ENCODE measurements at regions of chr4 and their contacts with region 1.

Region 1: GRCh38 chr4:184474263-184475095 is at the start of gene IRF2:
- DNase-seq: peak; percentile 99
- ATAC-seq: peak; percentile 76
- H3K4me3 Mint-ChIP-seq: peak within 1 kb of the TSS; percentile 88
- H3K27ac Mint-ChIP-seq: peak within 1 kb of the TSS; percentile 94
- H3K4me1 Mint-ChIP-seq: peaks cover 59% of the 10 kb centered on the region
- H3K27me3 Mint-ChIP-seq: no peaks in the 10 kb centered on the region
- total RNA-seq, gene IRF2: 50.1 to 68.9 TPM

Region 2: DNA sequence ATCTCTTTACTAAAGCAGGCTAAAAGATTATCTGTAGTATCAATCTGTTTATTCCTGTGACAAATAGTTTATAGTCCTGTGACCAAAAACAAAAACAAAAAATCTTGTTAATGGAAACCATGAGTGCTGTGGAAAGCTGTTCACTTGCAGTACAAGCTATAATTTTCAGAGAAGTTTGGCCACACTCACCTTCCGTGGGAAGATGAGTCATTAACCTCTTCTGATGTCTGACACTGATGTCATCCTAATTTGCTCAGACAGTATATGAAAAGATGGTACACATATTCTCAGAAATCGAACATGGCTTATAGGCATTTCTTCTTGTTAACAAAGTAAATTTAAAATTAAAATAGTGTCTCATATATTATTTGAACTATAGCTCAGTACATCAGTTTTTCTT is 236.9 kb before region 1 on chr4:
- CTCF ChIA-PET with region 1: no interaction called
- POLR2A ChIA-PET with region 1: no interaction called
- intact Hi-C with region 1: loop called in 1 of 2 experiments (anchors 1 kb)
- DNase-seq: peak; percentile 73
- ATAC-seq: peak; percentile 97
- H3K4me3 Mint-ChIP-seq: peak overlapping the region; percentile 9
- H3K27ac Mint-ChIP-seq: peak overlapping the region; percentile 84
- H3K4me1 Mint-ChIP-seq: peaks cover 28% of the 10 kb centered on the region
- H3K27me3 Mint-ChIP-seq: no peaks in the 10 kb centered on the region

Region 3: DNA sequence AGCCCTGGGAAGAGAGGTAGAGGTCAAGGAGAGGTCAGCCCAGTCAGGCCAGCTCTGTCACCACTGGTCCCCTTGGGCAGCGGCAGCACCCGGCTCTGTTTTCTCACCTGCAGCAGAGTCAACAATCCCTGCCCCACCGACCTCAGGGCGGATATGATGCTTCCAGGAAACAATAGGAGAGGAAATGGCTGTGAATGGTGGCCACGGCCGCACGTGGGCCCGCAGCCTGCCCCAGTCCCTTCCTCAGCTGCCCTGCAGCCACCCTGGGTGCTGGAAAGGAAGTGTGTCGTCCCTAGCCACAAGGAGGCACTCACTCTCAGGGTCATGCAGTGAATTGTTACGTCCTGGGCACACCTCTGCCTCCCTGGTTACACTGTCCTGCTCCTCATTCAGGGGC is 164.3 kb before region 1 on chr4:
- CTCF ChIA-PET with region 1: interaction called, 3 read pairs
- POLR2A ChIA-PET with region 1: no interaction called
- intact Hi-C with region 1: loop called in 1 of 2 experiments (anchors 5 kb)
- DNase-seq: peak; percentile 68
- ATAC-seq: peak; percentile 74
- H3K4me3 Mint-ChIP-seq: no peak overlapping the region
- H3K27ac Mint-ChIP-seq: peak overlapping the region; percentile 55
- H3K4me1 Mint-ChIP-seq: peaks cover 50% of the 10 kb centered on the region
- H3K27me3 Mint-ChIP-seq: no peaks in the 10 kb centered on the region

Region 4: GRCh38 chr4:184485279-184485678 is 10.8 kb after region 1 on chr4:
- CTCF ChIA-PET with region 1: no interaction called
- POLR2A ChIA-PET with region 1: interaction called, 4 read pairs
- intact Hi-C with region 1: loop called in 1 of 2 experiments (anchors 1 kb)
- DNase-seq: no peak
- ATAC-seq: no peak
- H3K4me3 Mint-ChIP-seq: no peak overlapping the region
- H3K27ac Mint-ChIP-seq: no peak overlapping the region
- H3K4me1 Mint-ChIP-seq: peaks cover 23% of the 10 kb centered on the region
- H3K27me3 Mint-ChIP-seq: peaks cover 1% of the 10 kb centered on the region

Region 5: DNA sequence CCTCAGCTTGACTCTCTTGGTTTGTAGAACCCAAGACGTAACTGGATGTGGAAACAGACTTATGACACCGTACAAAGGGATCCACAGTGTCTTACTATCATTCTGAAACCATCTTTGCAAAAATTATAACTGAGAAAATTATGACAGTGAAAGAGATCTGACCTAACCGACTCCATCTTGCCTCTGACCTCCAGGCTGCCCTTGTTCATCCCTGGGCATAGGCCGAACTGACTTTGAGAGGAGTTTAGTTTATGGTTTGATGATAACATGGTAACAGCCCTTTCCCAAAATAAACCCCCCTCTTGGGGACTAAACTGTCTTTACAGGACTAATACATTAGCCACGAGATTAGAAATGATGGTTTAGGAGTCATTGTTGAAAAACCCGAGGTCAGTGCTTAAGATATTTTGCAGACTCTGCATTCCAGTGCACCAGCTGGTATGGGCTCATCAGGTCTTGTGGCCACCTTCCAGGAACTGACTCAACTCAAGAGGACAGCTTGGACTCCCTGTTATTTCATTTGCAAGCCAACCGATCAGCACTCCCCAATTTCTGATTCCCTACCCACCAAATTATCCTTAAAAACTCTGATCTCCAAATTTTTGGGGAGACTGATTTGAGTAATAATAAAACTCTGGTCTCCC is 125.1 kb after region 1 on chr4:
- CTCF ChIA-PET with region 1: no interaction called
- POLR2A ChIA-PET with region 1: no interaction called
- intact Hi-C with region 1: no loop called
- DNase-seq: no peak
- ATAC-seq: no peak
- H3K4me3 Mint-ChIP-seq: no peak overlapping the region
- H3K27ac Mint-ChIP-seq: no peak overlapping the region
- H3K4me1 Mint-ChIP-seq: peaks cover 13% of the 10 kb centered on the region
- H3K27me3 Mint-ChIP-seq: peaks cover 2% of the 10 kb centered on the region

Region 6: GRCh38 chr4:184627765-184628480 is 153.4 kb after region 1 on chr4:
- CTCF ChIA-PET with region 1: no interaction called
- POLR2A ChIA-PET with region 1: no interaction called
- intact Hi-C with region 1: loop called in 1 of 2 experiments (anchors 5 kb)
- DNase-seq: peak; percentile 17
- ATAC-seq: peak; percentile 31
- H3K4me3 Mint-ChIP-seq: no peak overlapping the region
- H3K27ac Mint-ChIP-seq: peak overlapping the region; percentile 2
- H3K4me1 Mint-ChIP-seq: peaks cover 48% of the 10 kb centered on the region
- H3K27me3 Mint-ChIP-seq: no peaks in the 10 kb centered on the region

Region 7: GRCh38 chr4:185203486-185204237 is 729.2 kb after region 1 on chr4 and contains the start of gene CFAP97:
- CTCF ChIA-PET with region 1: no interaction called
- POLR2A ChIA-PET with region 1: no interaction called
- intact Hi-C with region 1: loop called in 1 of 2 experiments (anchors 2 kb)
- DNase-seq: peak; percentile 82
- ATAC-seq: peak; percentile 85
- H3K4me3 Mint-ChIP-seq: peak within 1 kb of the TSS; percentile 94
- H3K27ac Mint-ChIP-seq: peak within 1 kb of the TSS; percentile 97
- H3K4me1 Mint-ChIP-seq: peaks cover 41% of the 10 kb centered on the region
- H3K27me3 Mint-ChIP-seq: no peaks in the 10 kb centered on the region
- total RNA-seq, gene CFAP97: 54.6 to 81.8 TPM

Measured in activated CD4-positive, alpha-beta T cell treated with anti-CD3 and anti-CD28 coated beads for 36 hours (primary cell).